ENCODE measurements at regions of chr2 and their contacts with region 1.

Region 1: GRCh38 chr2:99662761-99663341 is 173.0 kb upstream of the REV1 start:
- DNase-seq: peak in 1 of 2 donors; percentile 68
- H3K4me3 ChIP-seq: no peak overlapping the region
- H3K27ac ChIP-seq: peak overlapping the region in 1 of 2 donors; percentile 16
- H3K4me1 ChIP-seq: peaks cover 4 to 27% of the 10 kb centered on the region in 2 donors
- H3K27me3 ChIP-seq: no peaks in the 10 kb centered on the region
- CTCF ChIP-seq: no peak

Region 2: DNA sequence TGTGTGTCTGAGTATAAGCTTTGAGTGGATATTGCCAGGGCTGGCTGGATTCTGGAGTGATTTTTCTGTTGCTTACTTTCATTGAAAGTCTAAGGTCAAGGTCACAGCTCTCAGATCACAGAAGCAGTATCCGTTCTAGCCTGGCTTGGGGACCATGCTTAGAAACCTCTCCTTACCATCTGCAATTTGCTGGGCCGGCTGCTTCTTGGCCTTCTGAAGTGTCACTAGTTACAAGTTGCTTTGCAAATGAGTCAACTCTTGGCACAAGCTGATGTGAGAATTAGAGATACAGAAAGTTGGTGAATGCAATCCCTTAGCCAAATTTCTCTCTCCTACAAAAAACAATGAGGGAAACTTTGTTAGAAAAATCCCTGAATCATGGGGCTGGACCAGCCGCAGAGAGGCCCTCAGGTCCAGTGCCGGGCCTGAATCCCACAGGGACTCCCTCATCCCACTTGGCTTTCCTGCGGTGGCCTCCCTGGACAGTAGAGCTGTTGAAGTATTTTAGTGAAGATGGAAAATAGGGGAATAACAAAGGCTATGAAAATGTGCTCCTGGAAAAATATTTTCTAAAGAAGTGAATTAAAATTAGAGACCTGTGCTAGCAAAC is 1409.3 kb before region 1 on chr2:
- intact Hi-C with region 1: no loop called
- DNase-seq: no peak
- H3K4me3 ChIP-seq: no peak overlapping the region
- H3K27ac ChIP-seq: peak overlapping the region; percentile 32 to 45
- H3K4me1 ChIP-seq: peaks cover 0 to 3% of the 10 kb centered on the region in 2 donors
- H3K27me3 ChIP-seq: no peaks in the 10 kb centered on the region
- CTCF ChIP-seq: no peak

Region 3: DNA sequence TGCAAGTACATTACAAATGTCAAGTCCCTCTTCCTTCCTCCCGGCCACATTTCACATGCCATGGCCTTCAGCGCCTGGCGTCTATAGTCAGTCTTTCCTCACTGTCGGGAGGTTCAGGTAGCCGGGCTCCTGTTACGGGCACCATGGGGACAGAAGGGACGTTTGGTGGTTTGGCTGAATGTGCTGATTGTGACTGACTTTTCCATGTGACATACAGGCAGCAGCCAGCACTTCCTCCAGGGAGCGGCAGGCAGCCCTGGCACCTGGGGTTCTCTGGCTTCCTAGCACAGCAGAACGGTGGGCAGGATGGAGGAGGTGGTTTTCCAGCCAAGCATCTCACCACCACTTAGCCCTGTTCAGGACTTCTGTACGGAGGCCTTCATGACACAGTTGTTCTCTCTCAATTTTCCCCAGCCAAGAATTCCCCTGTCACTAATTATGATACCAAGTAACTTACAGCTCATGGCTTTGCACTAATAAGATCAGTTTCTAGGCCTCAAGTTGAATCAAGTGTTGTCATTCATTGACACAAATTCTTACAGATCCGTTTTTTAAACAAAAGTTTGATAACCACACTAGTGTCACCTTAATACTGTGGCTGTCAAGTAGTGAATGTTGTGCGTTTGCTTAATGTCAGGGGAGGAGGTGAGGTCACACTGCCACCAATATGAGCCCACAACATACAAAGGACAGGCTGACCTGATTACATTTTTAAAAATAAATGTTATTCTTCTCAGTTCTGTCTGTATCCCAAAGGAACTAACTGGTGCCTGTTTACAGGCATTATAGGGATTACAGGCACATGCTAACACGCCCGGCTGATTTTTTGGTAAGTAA is 89.0 kb before region 1 on chr2:
- intact Hi-C with region 1: no loop called
- DNase-seq: no peak
- H3K4me3 ChIP-seq: no peak overlapping the region
- H3K27ac ChIP-seq: no peak overlapping the region
- H3K4me1 ChIP-seq: peaks cover 0 to 3% of the 10 kb centered on the region in 2 donors
- H3K27me3 ChIP-seq: no peaks in the 10 kb centered on the region
- CTCF ChIP-seq: no peak

Region 4: DNA sequence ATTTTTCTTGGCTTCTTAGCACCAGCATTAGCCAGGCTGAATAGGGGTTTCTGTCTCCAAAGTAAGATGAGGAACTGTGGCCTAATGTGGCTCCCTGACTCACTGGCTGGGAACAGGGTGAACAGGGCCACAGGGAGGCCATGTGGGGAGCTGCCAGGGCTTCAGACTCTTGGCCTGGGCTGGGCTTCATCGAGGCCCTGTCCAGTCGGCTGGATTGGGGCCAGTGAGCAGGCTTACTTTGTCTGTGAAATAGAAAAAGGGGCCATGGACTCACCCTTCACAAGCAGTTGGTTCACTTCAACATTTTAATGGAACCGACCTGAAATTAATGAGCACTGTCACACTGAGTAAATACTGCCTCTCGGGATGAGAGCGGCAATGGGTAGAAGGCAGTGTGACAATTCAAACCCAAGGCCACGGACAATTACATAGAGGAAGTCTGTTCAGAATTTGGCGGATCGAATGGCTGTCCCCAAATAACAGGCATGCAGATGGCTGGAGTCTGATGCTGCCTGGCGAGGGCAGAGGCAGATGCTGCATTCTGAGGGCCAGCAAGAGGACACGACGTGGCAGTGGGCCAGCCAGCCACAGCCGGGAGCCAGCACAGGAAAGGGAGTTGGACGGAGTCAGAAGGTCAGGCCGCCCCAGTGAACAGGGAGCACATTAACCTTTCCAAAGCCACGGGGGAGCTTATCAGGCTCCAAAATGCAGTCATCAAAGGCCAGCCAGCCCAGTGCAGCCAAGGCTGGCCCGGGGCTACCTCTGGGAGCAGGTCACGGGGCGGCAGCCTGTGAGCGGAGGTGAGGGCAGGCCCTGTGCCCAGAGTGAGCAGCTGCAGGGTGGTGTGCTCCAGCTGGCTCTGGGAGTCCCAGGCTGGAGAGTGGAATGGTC is 26.5 kb before region 1 on chr2:
- intact Hi-C with region 1: loop called (anchors 2 kb)
- DNase-seq: peak; percentile 35 to 81
- H3K4me3 ChIP-seq: no peak overlapping the region
- H3K27ac ChIP-seq: peak overlapping the region; percentile 69 to 77
- H3K4me1 ChIP-seq: peaks cover 5 to 15% of the 10 kb centered on the region in 2 donors
- H3K27me3 ChIP-seq: no peaks in the 10 kb centered on the region
- CTCF ChIP-seq: no peak

Region 5: DNA sequence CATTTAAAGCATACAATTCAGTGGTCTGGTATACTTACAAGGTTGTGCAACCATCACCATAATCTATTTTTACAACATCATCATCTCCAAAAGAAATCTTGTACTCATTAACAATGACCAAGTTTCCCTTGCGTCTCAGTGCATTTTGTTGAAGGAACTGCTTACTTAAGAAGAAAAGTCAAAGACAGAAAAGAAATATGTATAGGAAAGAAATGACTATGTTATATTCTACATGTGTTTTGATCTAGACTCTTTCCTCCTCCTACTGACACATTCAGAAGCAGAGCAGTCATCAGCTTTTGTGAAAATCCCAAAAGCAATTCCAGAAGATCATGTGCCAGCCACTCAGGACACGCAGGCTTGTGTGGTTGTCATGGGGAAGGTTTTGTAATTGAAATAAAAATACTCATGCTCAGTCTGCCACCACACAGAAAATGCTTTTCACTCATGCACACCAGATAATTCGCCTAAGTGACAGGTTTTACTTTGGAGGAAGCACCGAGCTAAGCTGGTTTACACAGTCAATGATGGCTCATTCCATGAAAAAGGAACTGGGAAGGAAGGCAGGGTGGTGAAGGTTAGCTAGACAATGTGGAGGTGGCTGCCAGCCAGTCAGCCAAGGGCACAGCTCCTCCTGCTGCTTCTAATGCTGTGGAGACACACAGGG is 14.5 kb before region 1 on chr2:
- intact Hi-C with region 1: loop called (anchors 2 kb)
- DNase-seq: peak in 1 of 2 donors; percentile 71
- H3K4me3 ChIP-seq: no peak overlapping the region
- H3K27ac ChIP-seq: peak overlapping the region; percentile 32 to 47
- H3K4me1 ChIP-seq: peaks cover 0 to 3% of the 10 kb centered on the region in 2 donors
- H3K27me3 ChIP-seq: no peaks in the 10 kb centered on the region
- CTCF ChIP-seq: no peak

Measured in ascending aorta (tissue), 2 donors.